Pancreas (tissue), 10 donors: ENCODE measurements at regions of chr4 and their contacts with region 1.

Region 1: GRCh38 chr4:15882675-15883086 is 55.9 kb downstream of the FGFBP1 start:
- DNase-seq: peak in 4 of 6 donors; percentile 21 to 59 (median 27)
- ATAC-seq: peak; percentile 60 to 91 (median 89)
- H3K4me3 ChIP-seq: no peak overlapping the region
- H3K27ac ChIP-seq: no peak overlapping the region
- H3K4me1 ChIP-seq: no peaks in the 10 kb centered on the region
- H3K27me3 ChIP-seq: no peaks in the 10 kb centered on the region
- CTCF ChIP-seq: peak; percentile 73 to 91 (median 86)

Region 2: GRCh38 chr4:15665753-15666365 is 216.8 kb before region 1 on chr4:
- intact Hi-C with region 1: no loop called
- DNase-seq: no peak
- ATAC-seq: peak in 2 of 4 donors; percentile 52 to 64
- H3K4me3 ChIP-seq: no peak overlapping the region
- H3K27ac ChIP-seq: no peak overlapping the region
- H3K4me1 ChIP-seq: no peaks in the 10 kb centered on the region
- H3K27me3 ChIP-seq: no peaks in the 10 kb centered on the region
- CTCF ChIP-seq: no peak

Region 3: DNA sequence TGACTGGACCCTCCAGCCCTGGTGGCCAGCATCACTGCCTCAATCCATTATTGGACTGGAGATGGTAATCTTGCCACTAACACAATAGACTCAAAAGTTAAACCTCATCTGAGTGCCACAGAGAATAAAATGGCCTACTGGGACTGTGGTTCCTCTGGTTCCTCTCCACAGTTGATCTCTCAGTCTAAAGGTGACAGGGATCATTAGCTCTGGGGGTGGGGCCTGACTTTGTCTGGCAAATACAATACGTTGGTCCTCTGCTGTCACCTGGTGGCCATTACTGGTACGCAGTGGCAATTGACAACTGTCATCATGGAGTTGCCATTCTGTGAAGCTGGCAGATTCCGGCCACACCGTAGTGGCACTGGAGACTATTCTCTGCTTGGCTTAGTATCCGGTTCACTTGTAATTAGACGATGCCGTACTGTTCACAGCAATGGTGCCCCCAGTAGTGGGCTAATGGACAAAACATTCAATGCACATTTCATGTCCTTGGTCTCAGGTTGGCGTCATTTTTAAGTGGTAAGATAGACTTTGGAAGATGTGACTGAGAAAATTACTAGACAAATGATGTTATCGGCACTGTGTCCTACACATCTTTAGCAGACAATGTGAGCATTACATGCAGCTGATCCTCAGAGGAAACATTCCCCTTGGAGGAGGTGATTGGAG is 73.6 kb after region 1 on chr4:
- intact Hi-C with region 1: loop called in 2 of 3 experiments (anchors 5 to 10 kb)
- DNase-seq: peak in 5 of 6 donors; percentile 55 to 81 (median 69)
- ATAC-seq: peak; percentile 79 to 99 (median 94)
- H3K4me3 ChIP-seq: no peak overlapping the region
- H3K27ac ChIP-seq: no peak overlapping the region
- H3K4me1 ChIP-seq: no peaks in the 10 kb centered on the region
- H3K27me3 ChIP-seq: no peaks in the 10 kb centered on the region
- CTCF ChIP-seq: peak; percentile 58 to 77 (median 74)

Region 4: GRCh38 chr4:16001484-16001858 is 118.8 kb after region 1 on chr4:
- intact Hi-C with region 1: no loop called
- DNase-seq: peak in 3 of 6 donors; percentile 24 to 46 (median 39)
- ATAC-seq: peak; percentile 77 to 99 (median 96)
- H3K4me3 ChIP-seq: no peak overlapping the region
- H3K27ac ChIP-seq: no peak overlapping the region
- H3K4me1 ChIP-seq: no peaks in the 10 kb centered on the region
- H3K27me3 ChIP-seq: no peaks in the 10 kb centered on the region
- CTCF ChIP-seq: peak; percentile 44 to 79 (median 62)